ENCODE measurements at regions of chr20 and their contacts with region 1.

Region 1: GRCh38 chr20:62668441-62669027 is 26.2 kb downstream of the SLCO4A1 start:
- DNase-seq: peak in 2 of 3 donors; percentile 75 to 85
- ATAC-seq: peak; percentile 38
- H3K4me3 ChIP-seq: no peak overlapping the region
- H3K4me1 ChIP-seq: peaks cover 15% of the 10 kb centered on the region
- CTCF ChIP-seq: peak; percentile 32

Region 2: DNA sequence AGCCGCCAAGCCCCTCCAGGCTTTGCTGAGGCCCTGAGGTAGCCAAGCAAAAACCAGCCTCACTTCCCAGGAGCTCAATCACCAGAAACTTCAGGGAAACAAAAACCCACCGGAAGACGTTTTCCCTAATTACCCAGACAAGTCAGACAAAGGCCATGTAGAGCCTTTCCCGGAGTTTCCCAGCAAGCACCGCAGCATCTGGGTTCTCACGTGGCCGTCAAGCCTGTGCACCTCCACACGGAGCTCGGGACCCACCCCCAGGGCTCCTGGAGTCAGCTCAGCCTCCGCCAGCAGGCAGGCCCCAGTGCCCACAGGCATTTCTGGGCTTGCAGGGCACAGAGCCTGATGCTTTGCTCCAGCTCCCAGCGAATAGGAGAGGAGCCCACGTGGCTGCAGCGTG is 117.6 kb after region 1 on chr20:
- intact Hi-C with region 1: loop called (anchors 5 kb)
- DNase-seq: no peak
- ATAC-seq: no peak
- H3K4me3 ChIP-seq: no peak overlapping the region
- H3K4me1 ChIP-seq: no peaks in the 10 kb centered on the region
- CTCF ChIP-seq: no peak

Region 3: GRCh38 chr20:62793912-62794724 is 125.6 kb after region 1 on chr20:
- intact Hi-C with region 1: loop called (anchors 5 kb)
- DNase-seq: peak; percentile 96 to 100 (median 98)
- ATAC-seq: peak; percentile 85
- H3K4me3 ChIP-seq: no peak overlapping the region
- H3K4me1 ChIP-seq: peaks cover 30% of the 10 kb centered on the region
- CTCF ChIP-seq: no peak